ENCODE measurements at regions of chr22 and their contacts with region 1.

Region 1: DNA sequence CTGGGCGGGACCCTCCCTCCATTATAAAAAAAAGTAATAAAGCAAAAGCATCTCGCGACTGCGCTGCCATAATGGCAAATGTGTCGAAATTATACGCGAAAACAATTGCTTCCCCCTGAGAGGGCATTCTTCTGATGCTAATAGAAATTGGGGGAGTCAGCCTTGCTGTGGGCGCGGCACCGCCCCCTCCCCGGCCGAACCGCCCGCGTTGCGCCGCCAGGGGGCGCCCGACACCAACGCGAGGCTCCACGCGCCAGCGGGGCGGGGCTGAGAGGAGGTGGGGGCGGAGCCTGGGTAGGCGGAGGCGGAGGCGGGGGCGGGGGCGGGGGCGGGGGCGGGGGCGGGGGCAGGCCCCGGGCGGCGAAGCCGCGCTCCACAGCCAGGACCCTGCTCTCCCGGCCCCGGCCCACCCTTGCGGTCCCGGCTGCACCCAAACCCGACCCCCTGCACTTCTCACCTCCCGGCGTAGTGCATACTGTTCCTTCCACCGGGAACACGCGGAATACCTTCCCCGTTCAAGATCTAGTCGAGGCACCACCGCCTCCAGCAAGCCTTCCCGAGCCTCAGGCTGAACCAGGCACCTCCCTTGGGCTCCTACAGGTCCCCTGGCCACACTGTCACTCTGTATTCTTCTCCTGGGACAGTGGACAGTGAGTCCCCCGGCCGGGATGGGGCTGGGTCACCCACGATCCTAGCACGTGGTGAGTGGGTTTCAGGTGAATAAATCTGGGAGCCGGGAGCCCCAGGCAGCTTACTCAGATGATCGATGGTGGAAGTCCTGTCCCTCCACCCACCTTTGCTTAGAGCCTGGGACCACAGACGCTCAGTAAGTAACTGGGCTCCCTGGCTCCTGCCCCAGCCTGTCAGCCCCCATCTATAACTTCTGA is 15.5 kb upstream of the UPK3A start:
- DNase-seq: peak; percentile 83 to 89
- ATAC-seq: peak; percentile 75 to 88 (median 84)
- H3K4me3 ChIP-seq: peak overlapping the region; percentile 16 to 70 (median 58)
- H3K27ac ChIP-seq: peak overlapping the region in 4 of 10 donors; percentile 16 to 71 (median 21)
- H3K4me1 ChIP-seq: peaks cover 7 to 52% (median 31%) of the 10 kb centered on the region in 9 donors
- H3K27me3 ChIP-seq: peaks cover 0 to 12% (median 0%) of the 10 kb centered on the region in 7 donors
- CTCF ChIP-seq: peak; percentile 80 to 98 (median 91)

Region 2: DNA sequence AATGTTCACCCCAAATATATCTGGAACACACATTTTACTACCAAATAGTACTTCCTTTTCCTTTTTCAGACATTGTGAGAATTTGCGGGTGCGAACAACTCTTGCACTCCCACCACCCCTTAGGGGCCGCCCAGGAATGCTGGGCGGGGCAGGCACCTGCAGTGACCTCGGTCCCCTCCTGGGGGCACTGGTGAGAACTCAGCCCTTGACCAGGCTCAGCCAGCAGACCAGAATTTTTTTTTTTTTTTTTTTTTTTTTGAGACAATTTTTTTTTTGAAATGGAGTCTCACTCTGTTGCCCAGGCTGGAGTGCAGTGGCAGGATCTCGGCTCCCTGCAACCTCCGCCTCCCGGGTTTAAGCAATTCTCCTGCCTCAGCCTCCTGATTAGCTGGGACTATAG is 441.0 kb before region 1 on chr22:
- intact Hi-C with region 1: loop called in 1 of 10 experiments (anchors 10 kb)
- DNase-seq: no peak
- ATAC-seq: no peak
- H3K4me3 ChIP-seq: no peak overlapping the region
- H3K27ac ChIP-seq: no peak overlapping the region
- H3K4me1 ChIP-seq: no peaks in the 10 kb centered on the region
- H3K27me3 ChIP-seq: peaks cover 0 to 6% (median 0%) of the 10 kb centered on the region in 7 donors
- CTCF ChIP-seq: peak in 6 of 9 donors; percentile 6 to 40 (median 20)

Region 3: GRCh38 chr22:44972363-44973083 is 296.7 kb before region 1 on chr22:
- intact Hi-C with region 1: no loop called
- DNase-seq: no peak
- ATAC-seq: no peak
- H3K4me3 ChIP-seq: no peak overlapping the region
- H3K27ac ChIP-seq: no peak overlapping the region
- H3K4me1 ChIP-seq: no peaks in the 10 kb centered on the region
- H3K27me3 ChIP-seq: peaks cover 0 to 28% (median 8%) of the 10 kb centered on the region in 7 donors
- CTCF ChIP-seq: no peak

Region 4: GRCh38 chr22:45309472-45310227 is 40.4 kb after region 1 on chr22 and contains the start of gene FAM118A:
- intact Hi-C with region 1: loop called in 5 of 10 experiments (anchors 2 to 5 kb)
- DNase-seq: peak; percentile 91 to 96
- ATAC-seq: peak; percentile 95 to 97 (median 96)
- H3K4me3 ChIP-seq: peak within 1 kb of the TSS; percentile 63 to 99 (median 97)
- H3K27ac ChIP-seq: peak within 1 kb of the TSS; percentile 43 to 94 (median 86)
- H3K4me1 ChIP-seq: peaks cover 8 to 37% (median 28%) of the 10 kb centered on the region in 9 donors
- H3K27me3 ChIP-seq: no peaks in the 10 kb centered on the region
- CTCF ChIP-seq: peak in 2 of 9 donors; percentile 24 to 28
- total RNA-seq, gene FAM118A: 10.4 to 30.8 (median 16.3) TPM

Region 5: DNA sequence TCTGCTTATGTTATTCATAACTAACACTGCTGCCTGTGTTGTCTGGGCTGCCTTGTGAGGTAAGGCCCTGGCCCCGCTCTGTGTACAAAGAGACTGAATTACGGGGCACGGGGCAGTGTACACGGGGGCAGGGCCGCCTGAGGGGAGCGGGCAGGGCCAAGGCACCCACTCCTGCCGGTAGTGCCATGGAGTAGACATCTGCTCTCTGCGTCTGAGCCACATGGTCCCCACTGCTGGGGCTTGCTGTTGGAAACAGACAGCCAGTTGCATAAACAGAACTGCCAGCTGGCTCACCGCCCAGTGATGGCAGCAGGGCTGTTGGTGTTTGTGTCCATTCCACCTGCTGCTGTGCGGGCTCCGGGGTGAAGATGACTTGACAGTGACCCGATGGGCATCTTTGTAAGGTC is 60.3 kb after region 1 on chr22:
- intact Hi-C with region 1: loop called in 2 of 10 experiments (anchors 10 kb)
- DNase-seq: peak; percentile 80 to 82
- ATAC-seq: peak; percentile 64 to 93 (median 84)
- H3K4me3 ChIP-seq: no peak overlapping the region
- H3K27ac ChIP-seq: peak overlapping the region in 9 of 10 donors; percentile 44 to 83 (median 61)
- H3K4me1 ChIP-seq: peaks cover 0 to 36% (median 20%) of the 10 kb centered on the region in 9 donors
- H3K27me3 ChIP-seq: no peaks in the 10 kb centered on the region
- CTCF ChIP-seq: no peak

Region 6: GRCh38 chr22:45336971-45337431 is 67.8 kb after region 1 on chr22:
- intact Hi-C with region 1: loop called in 1 of 10 experiments (anchors 10 kb)
- DNase-seq: peak; percentile 78 to 88
- ATAC-seq: peak; percentile 50 to 86 (median 66)
- H3K4me3 ChIP-seq: peak overlapping the region in 2 of 10 donors; percentile 11
- H3K27ac ChIP-seq: peak overlapping the region in 9 of 10 donors; percentile 52 to 86 (median 61)
- H3K4me1 ChIP-seq: peaks cover 5 to 52% (median 43%) of the 10 kb centered on the region in 9 donors
- H3K27me3 ChIP-seq: no peaks in the 10 kb centered on the region
- CTCF ChIP-seq: no peak

Region 7: GRCh38 chr22:45435544-45436139 is 166.4 kb after region 1 on chr22:
- intact Hi-C with region 1: loop called (anchors 1 to 5 kb)
- DNase-seq: peak; percentile 87 to 89
- ATAC-seq: peak; percentile 90 to 97 (median 94)
- H3K4me3 ChIP-seq: peak overlapping the region in 5 of 10 donors; percentile 18 to 35 (median 31)
- H3K27ac ChIP-seq: peak overlapping the region in 8 of 10 donors; percentile 15 to 78 (median 60)
- H3K4me1 ChIP-seq: peaks cover 0 to 14% (median 8%) of the 10 kb centered on the region in 9 donors
- H3K27me3 ChIP-seq: peaks cover 0 to 9% (median 0%) of the 10 kb centered on the region in 7 donors
- CTCF ChIP-seq: peak; percentile 93 to 99 (median 96)

Region 8: GRCh38 chr22:45553351-45554039 is 284.3 kb after region 1 on chr22:
- intact Hi-C with region 1: loop called (anchors 1 to 5 kb)
- DNase-seq: peak; percentile 78 to 84
- ATAC-seq: peak; percentile 47 to 81 (median 68)
- H3K4me3 ChIP-seq: no peak overlapping the region
- H3K27ac ChIP-seq: peak overlapping the region; percentile 69 to 86 (median 76)
- H3K4me1 ChIP-seq: peaks cover 5 to 53% (median 35%) of the 10 kb centered on the region in 9 donors
- H3K27me3 ChIP-seq: peaks cover 0 to 4% (median 0%) of the 10 kb centered on the region in 7 donors
- CTCF ChIP-seq: peak; percentile 77 to 95 (median 92)